ENCODE measurements at regions of chr2 and their contacts with region 1.

Region 1: GRCh38 chr2:177164584-177165052 is 48.0 kb upstream of the HNRNPA3 start:
- DNase-seq: peak; percentile 35
- H3K4me3 ChIP-seq: peak overlapping the region; percentile 20; the same call in 1 of the 2 replicates
- H3K27me3 ChIP-seq: 0 out of 2 replicates have a peak, but pooled peaks cover 1% of the 10 kb centered on the region
- CTCF ChIP-seq: peak; percentile 100

Region 2: GRCh38 chr2:177118636-177119035 is 46.0 kb before region 1 on chr2:
- CTCF ChIA-PET with region 1: no interaction called
- POLR2A ChIA-PET with region 1: no interaction called
- DNase-seq: no peak
- H3K4me3 ChIP-seq: no peak overlapping the region
- H3K27me3 ChIP-seq: no peaks in the 10 kb centered on the region
- CTCF ChIP-seq: no peak

Region 3: GRCh38 chr2:177129610-177130009 is 35.0 kb before region 1 on chr2:
- CTCF ChIA-PET with region 1: no interaction called
- POLR2A ChIA-PET with region 1: no interaction called
- DNase-seq: no peak
- H3K4me3 ChIP-seq: no peak overlapping the region
- H3K27me3 ChIP-seq: no peaks in the 10 kb centered on the region; the same call in 1 of the 2 replicates
- CTCF ChIP-seq: no peak

Region 4: DNA sequence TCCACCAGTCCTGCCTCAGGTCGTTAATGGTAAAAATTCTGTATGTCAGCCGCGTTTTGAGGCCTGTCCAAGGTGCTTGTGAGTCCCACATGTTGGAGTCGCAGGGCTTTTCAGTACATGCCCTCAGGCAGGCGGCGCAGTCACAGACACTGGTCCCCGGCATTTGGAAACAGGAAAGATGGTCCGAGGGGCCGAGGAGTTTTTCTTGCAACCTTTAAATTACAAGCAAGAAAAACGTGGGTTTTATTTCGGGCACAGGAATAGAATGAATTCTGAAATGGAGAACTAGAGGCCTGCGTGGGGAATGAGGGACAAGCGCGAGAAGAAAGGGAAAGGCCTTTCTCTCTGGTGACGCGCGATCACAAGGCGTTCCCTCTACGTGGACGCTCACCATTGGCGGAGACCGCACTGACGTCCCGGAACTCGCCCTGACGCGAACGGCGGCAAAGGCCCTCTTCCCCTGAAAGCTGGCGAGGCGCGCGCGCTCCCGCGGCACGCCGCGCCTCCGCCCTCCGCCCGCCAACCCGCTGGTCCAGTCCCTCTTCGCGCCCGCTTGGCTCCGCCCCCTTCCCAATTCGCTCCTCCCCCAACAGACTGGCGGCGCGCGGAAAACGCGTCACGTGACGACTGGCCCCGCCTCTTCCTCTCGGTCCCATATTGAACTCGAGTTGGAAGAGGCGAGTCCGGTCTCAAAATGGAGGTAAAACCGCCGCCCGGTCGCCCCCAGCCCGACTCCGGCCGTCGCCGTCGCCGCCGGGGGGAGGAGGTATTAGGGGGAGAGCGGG is 47.7 kb after region 1 on chr2 and contains the start of gene HNRNPA3:
- CTCF ChIA-PET with region 1: interaction called, 10 read pairs
- POLR2A ChIA-PET with region 1: interaction called, 3 read pairs
- DNase-seq: peak; percentile 95
- H3K4me3 ChIP-seq: peak within 1 kb of the TSS; percentile 84
- H3K27me3 ChIP-seq: no peaks in the 10 kb centered on the region
- CTCF ChIP-seq: peak; percentile 29; the same call in 1 of the 2 replicates
- polyA plus RNA-seq, gene HNRNPA3: 31.8 and 74.9 TPM in 2 replicates

Region 5: DNA sequence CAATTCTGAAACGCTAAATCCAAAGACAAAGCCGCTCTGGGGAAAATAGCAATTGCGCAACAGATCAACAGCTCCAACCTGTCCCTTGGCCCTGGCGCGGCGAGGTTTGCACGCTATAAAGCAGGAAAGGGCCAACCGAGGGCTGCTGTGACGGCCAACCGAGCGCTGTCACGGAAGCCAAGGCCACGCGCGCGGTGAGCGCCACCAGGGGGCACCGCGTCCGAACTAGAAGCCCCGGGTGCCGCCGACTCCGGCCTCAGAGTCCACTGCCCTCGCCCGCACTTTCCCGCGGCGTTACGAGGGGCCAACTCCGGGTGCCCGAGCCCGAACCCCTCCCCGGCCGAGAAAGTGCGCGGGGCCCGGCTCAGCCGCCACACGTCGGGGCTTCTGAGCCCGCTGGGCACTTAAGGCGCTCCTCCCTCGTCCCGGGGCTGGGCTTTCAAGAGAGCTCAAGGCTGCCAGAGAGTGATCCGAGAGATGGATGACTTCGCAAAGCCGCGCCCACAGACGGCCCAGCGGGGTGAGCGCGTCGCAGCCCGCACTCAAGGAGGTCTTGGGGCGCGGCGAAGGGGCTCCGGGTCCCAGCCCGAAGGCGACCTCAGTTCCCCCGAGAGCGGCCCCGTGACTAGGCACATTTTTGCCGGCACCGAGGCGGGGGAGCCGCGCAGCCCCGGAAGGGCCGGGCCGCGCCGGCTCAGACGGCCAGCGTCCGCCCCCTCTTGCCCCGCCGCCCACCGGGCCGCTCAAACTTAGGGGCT is 99.0 kb after region 1 on chr2:
- CTCF ChIA-PET with region 1: interaction called, 59 read pairs
- POLR2A ChIA-PET with region 1: interaction called, 6 read pairs
- DNase-seq: peak; percentile 78
- H3K4me3 ChIP-seq: peak overlapping the region; percentile 88
- H3K27me3 ChIP-seq: no peaks in the 10 kb centered on the region
- CTCF ChIP-seq: peak; percentile 91

Region 6: GRCh38 chr2:177325270-177325929 is 160.8 kb after region 1 on chr2:
- CTCF ChIA-PET with region 1: interaction called, 11 read pairs
- POLR2A ChIA-PET with region 1: no interaction called
- DNase-seq: no peak
- H3K4me3 ChIP-seq: no peak overlapping the region
- H3K27me3 ChIP-seq: no peaks in the 10 kb centered on the region; the same call in 1 of the 2 replicates
- CTCF ChIP-seq: no peak

Region 7: GRCh38 chr2:177419274-177419673 is 254.7 kb after region 1 on chr2:
- CTCF ChIA-PET with region 1: interaction called, 31 read pairs
- POLR2A ChIA-PET with region 1: no interaction called
- DNase-seq: no peak
- H3K4me3 ChIP-seq: no peak overlapping the region
- H3K27me3 ChIP-seq: no peaks in the 10 kb centered on the region
- CTCF ChIP-seq: no peak

Region 8: DNA sequence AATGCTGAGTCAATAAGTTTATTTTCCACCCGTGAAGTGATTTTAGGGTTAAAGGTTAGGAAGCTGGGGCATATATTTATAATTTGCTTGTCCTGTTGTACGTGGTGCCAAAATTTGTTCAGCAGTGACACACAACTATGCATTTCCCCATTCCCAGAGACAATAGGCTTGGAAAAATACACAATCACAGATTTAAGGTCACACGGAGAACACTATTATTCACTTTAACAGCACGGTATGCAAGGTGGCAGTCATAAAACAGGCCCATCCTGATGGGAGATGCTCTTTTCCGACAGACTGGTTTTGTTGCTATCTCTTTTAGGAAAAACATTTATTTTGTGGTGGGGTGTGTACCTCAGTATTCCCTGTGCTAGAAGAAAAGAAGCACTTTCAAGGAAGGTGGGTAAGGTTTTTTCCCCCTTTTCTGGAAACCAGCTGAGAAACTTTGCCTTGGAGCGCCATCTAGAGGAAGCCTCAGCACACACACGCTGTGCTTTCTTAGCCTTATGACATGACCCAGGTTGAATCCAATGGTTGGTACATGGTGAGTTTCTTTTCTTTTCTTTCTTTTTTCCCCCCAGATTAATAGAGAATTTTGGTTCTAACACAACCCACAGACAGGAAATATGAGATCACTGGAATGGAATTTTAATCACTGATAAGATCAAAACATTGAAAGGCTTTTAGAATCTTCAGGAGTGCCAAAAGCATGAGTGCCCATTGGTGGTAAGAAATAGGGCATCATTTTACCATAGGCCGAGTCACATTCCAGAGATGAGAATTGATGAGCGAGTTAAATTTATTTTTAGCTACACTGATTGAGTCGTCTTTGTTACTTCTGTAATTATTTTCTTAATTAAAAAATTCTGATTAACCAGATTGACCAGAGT is 560.0 kb after region 1 on chr2:
- CTCF ChIA-PET with region 1: interaction called, 22 read pairs
- POLR2A ChIA-PET with region 1: no interaction called
- DNase-seq: no peak
- H3K4me3 ChIP-seq: no peak overlapping the region
- H3K27me3 ChIP-seq: peaks cover 3% of the 10 kb centered on the region; the same call in 1 of the 2 replicates
- CTCF ChIP-seq: peak; percentile 92

Measured in BJ (cell line).